ENCODE measurements at regions of chr17 and their contacts with region 1.

Region 1: GRCh38 chr17:39777534-39778365 is 40.0 kb downstream of the GRB7 start:
- DNase-seq: peak; percentile 48
- CTCF ChIP-seq: no peak

Region 2: DNA sequence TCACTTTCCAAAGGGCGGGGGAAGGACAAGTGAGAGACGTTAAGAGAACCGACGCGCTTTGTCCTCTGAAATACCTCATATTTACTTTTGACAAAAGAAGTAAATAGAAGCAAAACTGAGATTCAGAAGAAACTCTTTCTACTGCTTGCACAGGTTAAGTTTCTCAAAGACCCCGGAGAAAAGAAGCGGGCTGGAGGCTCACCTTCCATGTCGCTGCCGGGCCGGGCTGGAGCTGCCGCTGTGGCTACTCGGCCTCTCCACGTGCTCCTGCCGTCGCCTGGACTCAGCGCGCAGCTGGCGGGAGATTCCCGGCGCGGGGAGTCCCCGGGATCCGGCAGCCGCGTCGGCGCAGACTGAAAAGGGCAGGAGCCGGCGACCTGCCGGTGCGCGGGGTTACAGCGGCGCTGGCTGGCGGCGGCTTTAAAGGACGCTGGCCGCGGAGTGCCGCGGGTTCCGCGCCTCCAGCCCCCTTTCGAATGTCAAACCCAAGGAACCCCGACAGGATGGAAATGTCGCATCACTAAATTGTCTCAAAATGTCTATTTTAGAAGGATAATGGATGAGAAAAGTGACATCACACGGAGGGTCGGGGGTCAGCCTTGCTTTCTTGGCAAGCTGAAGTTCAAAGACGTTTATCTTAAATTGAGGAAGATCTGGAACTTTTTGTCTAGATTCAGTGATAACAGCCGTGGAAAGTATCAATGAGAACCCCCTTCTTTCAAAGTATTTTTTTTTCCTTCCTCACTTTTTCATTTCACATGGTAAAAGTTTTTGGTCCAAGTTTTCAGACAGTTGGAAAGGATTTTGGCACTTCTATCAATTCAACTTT is 86.4 kb after region 1 on chr17 and contains the start of gene IKZF3:
- in situ Hi-C with region 1: loop called (anchors 5 kb)
- DNase-seq: peak; percentile 82
- CTCF ChIP-seq: peak; percentile 78

Region 3: DNA sequence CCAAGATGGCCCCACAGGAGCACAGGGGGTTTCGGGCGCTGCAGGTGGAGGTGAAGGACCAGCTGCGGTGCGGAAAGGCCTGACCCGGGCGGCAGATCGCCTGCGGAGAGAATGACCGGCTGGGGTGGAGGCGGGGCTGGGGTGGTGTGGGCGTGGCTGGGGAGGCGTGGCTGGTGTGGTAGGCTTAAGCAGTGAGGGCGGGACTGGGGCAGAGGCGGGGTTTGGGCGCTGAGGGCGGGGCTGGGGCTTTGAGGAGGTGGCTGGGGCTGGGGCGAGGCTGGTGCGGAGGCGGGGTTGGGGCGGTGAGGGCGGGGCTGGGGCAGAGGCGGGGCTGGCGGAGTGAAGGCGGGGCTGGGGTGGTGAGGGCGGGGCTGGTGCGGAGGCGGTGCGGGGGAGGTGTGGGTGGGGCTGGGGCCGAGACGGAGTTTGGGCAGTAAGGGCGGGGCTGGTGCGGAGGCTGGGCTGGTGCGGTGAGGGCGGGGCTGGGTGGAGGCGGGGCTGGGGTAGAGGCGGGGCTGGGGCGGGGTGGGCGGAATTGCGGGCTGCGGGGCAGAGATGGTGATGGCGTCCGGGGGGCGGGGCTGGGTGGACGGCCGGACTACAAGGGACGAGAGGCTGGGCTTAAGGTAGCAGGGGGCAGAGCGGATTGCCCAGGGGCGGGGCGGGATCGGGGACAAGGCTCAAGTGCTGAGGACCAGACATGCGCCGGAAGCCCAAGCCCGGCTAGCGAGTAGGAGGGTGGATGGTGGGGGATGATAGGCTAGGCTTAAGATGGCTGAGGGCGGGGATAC is 175.1 kb after region 1 on chr17:
- in situ Hi-C with region 1: no loop called
- DNase-seq: peak; percentile 98
- CTCF ChIP-seq: no peak